Activated CD4-positive, alpha-beta T cell treated with anti-CD3 and anti-CD28 coated beads for 36 hours (primary cell): ENCODE measurements at regions of chr5 and their contacts with region 1.

Region 1: GRCh38 chr5:80960531-80961375 is 590 bp downstream of the RASGRF2 start:
- DNase-seq: peak; percentile 69
- ATAC-seq: peak; percentile 42
- H3K4me3 Mint-ChIP-seq: peak overlapping the region; percentile 83
- H3K27ac Mint-ChIP-seq: peak overlapping the region; percentile 86
- H3K4me1 Mint-ChIP-seq: peaks cover 74% of the 10 kb centered on the region
- H3K27me3 Mint-ChIP-seq: peaks cover 5% of the 10 kb centered on the region

Region 2: DNA sequence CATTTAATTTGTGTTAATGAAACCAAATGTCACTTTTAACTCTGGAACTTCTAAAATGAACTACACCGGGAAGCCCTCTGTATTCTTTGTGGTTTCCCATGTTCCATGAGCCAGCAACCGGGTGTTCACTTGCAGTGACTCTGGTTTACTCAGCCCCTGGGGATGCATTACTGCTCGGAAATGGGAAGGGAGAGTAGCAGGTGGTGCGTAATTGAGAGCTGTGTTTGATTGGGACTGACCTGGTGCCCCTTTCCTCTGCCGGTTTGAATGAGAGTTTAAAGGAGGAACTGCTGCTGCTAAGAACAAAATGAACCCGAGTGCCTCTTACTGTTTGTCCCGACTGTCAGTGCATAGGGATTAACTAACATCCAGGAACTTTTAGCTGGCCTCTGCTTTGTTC is 205.9 kb before region 1 on chr5:
- CTCF ChIA-PET with region 1: no interaction called
- POLR2A ChIA-PET with region 1: no interaction called
- intact Hi-C with region 1: loop called (anchors 2 to 5 kb)
- DNase-seq: peak; percentile 71
- ATAC-seq: peak; percentile 60
- H3K4me3 Mint-ChIP-seq: peak overlapping the region; percentile 41
- H3K27ac Mint-ChIP-seq: peak overlapping the region; percentile 80
- H3K4me1 Mint-ChIP-seq: peaks cover 55% of the 10 kb centered on the region
- H3K27me3 Mint-ChIP-seq: no peaks in the 10 kb centered on the region

Region 3: DNA sequence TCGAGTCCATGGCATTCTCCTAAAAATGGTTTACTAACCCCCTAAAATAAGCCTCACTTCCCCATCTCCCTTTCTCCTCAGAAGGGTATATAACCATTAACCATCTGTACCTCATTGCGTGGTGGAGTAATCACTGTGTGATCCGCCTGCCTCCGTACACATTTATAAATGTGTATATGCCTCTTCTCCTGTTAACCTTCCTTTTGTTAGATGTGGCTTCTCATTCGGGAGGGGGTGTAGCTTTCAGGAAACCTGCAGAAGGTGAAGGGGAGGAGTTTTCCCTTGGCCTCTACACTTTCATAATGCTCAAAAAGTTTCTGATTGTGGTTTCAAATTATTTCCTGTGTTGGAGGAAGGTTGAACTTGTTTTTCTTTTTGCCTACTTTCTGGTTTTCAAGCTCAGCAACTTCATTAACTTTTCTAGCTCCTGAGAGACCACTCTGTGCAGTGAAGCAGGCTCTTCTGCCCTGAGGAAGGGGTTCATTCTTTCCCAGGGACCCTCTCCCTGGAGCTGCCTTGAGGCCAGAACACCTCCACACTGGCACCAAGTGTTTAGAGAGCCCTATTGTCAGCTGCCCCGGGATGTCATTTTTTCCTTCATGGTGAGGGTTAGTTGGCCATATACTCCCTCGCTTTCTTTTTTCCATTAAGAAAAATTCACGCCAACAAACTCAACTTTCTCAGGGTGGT is 46.3 kb after region 1 on chr5:
- CTCF ChIA-PET with region 1: no interaction called
- POLR2A ChIA-PET with region 1: interaction called, 5 read pairs
- intact Hi-C with region 1: loop called (anchors 1 to 2 kb)
- DNase-seq: peak; percentile 71
- ATAC-seq: peak; percentile 83
- H3K4me3 Mint-ChIP-seq: peak overlapping the region; percentile 77
- H3K27ac Mint-ChIP-seq: peak overlapping the region; percentile 96
- H3K4me1 Mint-ChIP-seq: peaks cover 82% of the 10 kb centered on the region
- H3K27me3 Mint-ChIP-seq: no peaks in the 10 kb centered on the region

Region 4: GRCh38 chr5:81020478-81021174 is 59.9 kb after region 1 on chr5:
- CTCF ChIA-PET with region 1: interaction called, 3 read pairs
- POLR2A ChIA-PET with region 1: interaction called, 3 read pairs
- intact Hi-C with region 1: loop called (anchors 2 kb)
- DNase-seq: no peak
- ATAC-seq: no peak
- H3K4me3 Mint-ChIP-seq: no peak overlapping the region
- H3K27ac Mint-ChIP-seq: no peak overlapping the region
- H3K4me1 Mint-ChIP-seq: peaks cover 90% of the 10 kb centered on the region
- H3K27me3 Mint-ChIP-seq: no peaks in the 10 kb centered on the region

Region 5: DNA sequence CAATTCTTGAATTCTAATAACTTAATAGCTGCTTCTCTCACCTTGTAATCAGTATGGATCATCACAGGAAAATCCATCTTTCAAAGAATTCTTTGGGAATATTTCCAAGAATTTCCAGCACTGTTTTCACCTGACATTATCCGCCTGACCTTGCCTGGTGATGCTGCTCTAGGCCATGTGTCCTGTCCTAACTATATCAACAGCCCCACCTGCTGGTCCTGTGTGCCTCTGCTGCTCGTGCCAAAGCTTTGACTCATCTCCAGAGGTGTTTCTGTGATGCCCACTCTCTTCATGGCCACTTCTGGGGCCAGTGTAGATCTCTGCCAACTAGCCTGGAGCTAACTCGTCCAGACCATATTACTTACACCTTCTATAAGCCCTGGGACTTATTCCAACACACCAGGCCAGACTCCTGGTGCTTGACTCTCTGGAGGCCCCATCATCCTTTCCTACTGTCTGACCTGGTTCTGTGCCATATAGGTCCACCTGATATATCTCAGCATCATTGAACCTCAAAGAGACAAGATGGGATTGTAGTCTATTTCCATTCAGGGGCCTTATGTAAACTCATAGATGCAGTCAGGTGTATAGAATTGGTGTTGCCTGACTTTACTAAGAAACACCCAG is 204.9 kb after region 1 on chr5:
- CTCF ChIA-PET with region 1: interaction called, 3 read pairs
- POLR2A ChIA-PET with region 1: no interaction called
- intact Hi-C with region 1: loop called in 1 of 2 experiments (anchors 10 kb)
- DNase-seq: peak; percentile 84
- ATAC-seq: peak; percentile 87
- H3K4me3 Mint-ChIP-seq: no peak overlapping the region
- H3K27ac Mint-ChIP-seq: no peak overlapping the region
- H3K4me1 Mint-ChIP-seq: peaks cover 16% of the 10 kb centered on the region
- H3K27me3 Mint-ChIP-seq: no peaks in the 10 kb centered on the region